Activated CD4-positive, alpha-beta memory T cell treated with anti-CD3 and anti-CD28 coated beads for 36 hours (primary cell): ENCODE measurements at regions of chr10 and their contacts with region 1.

Region 1: GRCh38 chr10:124461438-124462347 is at the start of gene LHPP:
- DNase-seq: peak; percentile 91
- H3K4me3 Mint-ChIP-seq: peak within 1 kb of the TSS; percentile 80
- H3K27ac Mint-ChIP-seq: peak within 1 kb of the TSS; percentile 66
- H3K4me1 Mint-ChIP-seq: peaks cover 23% of the 10 kb centered on the region
- H3K27me3 Mint-ChIP-seq: peaks cover 3% of the 10 kb centered on the region
- total RNA-seq, gene LHPP: 10.1 to 12.3 TPM

Region 2: DNA sequence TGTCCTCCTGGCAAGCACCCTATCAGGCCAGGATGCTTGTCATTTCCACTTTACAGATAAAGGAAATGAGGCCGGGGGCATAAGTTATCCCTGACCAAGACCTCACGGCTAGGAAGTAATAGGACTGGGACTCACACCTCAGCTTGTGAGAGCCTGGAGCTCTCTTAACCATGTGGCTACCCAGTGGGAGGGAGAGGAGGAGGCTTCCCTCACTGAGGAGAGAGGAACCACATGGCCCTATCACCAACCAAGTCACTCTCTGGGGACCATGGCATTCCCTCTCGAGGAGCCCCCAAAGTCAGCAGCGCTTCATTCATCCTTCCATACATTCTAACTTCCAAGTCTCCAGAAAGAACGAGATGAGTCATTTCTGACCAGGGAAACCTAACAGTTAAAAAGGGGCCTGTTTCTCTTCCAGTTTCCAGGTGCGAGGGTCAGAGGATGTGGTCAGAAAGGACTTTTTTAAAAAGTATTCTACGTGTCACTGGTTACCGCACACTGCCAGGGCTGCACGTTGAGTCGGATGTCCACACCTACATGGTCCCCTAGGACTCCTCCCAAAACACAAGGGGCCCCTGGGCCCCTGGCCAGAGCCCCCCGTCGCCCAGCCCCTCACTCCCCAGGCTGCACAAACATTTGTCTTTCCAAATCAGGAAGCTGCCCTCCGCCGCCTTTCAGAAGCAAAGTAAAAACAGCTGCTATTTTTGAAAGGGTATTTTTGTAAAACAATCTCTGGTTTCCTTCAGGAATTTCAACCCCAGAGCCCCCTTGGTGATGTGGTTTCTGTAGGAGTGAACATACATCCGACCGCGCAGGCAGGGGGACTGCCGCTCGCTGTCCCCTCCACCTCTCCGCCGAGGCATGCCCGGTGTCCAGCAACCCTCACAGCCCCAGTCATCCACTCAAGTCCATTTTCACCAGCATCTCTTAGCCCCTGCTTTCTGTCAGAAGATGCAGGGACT is 240.1 kb before region 1 on chr10:
- CTCF ChIA-PET with region 1: no interaction called
- POLR2A ChIA-PET with region 1: no interaction called
- intact Hi-C with region 1: loop called (anchors 10 kb)
- DNase-seq: no peak
- H3K4me3 Mint-ChIP-seq: no peak overlapping the region
- H3K27ac Mint-ChIP-seq: no peak overlapping the region
- H3K4me1 Mint-ChIP-seq: no peaks in the 10 kb centered on the region
- H3K27me3 Mint-ChIP-seq: peaks cover 9% of the 10 kb centered on the region

Region 3: GRCh38 chr10:124418726-124419501 is 42.8 kb before region 1 on chr10 and contains the start of gene OAT:
- CTCF ChIA-PET with region 1: interaction called, 4 read pairs
- POLR2A ChIA-PET with region 1: interaction called, 8 read pairs
- intact Hi-C with region 1: loop called (anchors 1 kb)
- DNase-seq: peak; percentile 97
- H3K4me3 Mint-ChIP-seq: peak within 1 kb of the TSS; percentile 79
- H3K27ac Mint-ChIP-seq: no peak within 1 kb of the TSS
- H3K4me1 Mint-ChIP-seq: peaks cover 16% of the 10 kb centered on the region
- H3K27me3 Mint-ChIP-seq: peaks cover 7% of the 10 kb centered on the region
- total RNA-seq, gene OAT: 34.6 to 38.1 TPM

Region 4: DNA sequence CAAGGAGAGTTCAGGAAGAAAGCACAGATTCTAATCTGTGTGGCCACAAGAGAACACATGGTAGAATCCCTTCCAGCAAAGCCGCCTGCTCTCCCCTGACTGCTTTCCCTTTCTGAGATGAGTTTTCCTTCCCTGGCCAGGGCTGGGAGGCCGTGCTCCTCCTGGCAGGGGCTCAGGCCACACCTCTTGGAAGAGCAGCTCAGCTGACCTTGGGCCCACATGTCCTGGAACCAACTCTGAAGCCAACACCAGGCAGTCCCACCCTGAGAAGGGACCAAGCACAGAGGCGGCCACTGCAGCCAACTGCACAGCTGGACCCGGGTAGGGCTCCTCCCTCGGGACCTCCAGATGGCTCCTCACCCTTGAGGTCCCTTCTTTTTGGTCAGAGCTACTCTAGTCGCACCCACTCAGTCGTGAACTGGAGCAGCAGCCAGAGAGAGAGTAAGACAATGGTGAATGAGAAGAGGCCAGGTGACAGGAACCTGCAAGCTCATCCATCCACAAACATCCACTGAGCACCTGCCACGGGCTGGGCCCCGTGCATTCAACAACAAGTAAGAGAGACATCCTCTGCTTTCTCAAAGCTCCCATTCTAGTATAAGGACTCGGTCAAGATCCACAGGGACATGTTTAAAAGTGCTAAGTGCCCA is 242.2 kb after region 1 on chr10:
- CTCF ChIA-PET with region 1: no interaction called
- POLR2A ChIA-PET with region 1: no interaction called
- intact Hi-C with region 1: no loop called
- DNase-seq: no peak
- H3K4me3 Mint-ChIP-seq: no peak overlapping the region
- H3K27ac Mint-ChIP-seq: peak overlapping the region; percentile 95
- H3K4me1 Mint-ChIP-seq: peaks cover 99% of the 10 kb centered on the region
- H3K27me3 Mint-ChIP-seq: no peaks in the 10 kb centered on the region

Region 5: GRCh38 chr10:124802313-124802675 is 340.6 kb after region 1 on chr10:
- CTCF ChIA-PET with region 1: no interaction called
- POLR2A ChIA-PET with region 1: no interaction called
- intact Hi-C with region 1: loop called (anchors 5 kb)
- DNase-seq: peak; percentile 39
- H3K4me3 Mint-ChIP-seq: peak overlapping the region; percentile 93
- H3K27ac Mint-ChIP-seq: peak overlapping the region; percentile 73
- H3K4me1 Mint-ChIP-seq: peaks cover 21% of the 10 kb centered on the region
- H3K27me3 Mint-ChIP-seq: peaks cover 2% of the 10 kb centered on the region

Region 6: GRCh38 chr10:124916585-124917427 is 455.1 kb after region 1 on chr10:
- CTCF ChIA-PET with region 1: interaction called, 3 read pairs
- POLR2A ChIA-PET with region 1: interaction called, 3 read pairs
- intact Hi-C with region 1: loop called (anchors 2 kb)
- DNase-seq: peak; percentile 97
- H3K4me3 Mint-ChIP-seq: peak overlapping the region; percentile 87
- H3K27ac Mint-ChIP-seq: peak overlapping the region; percentile 81
- H3K4me1 Mint-ChIP-seq: peaks cover 30% of the 10 kb centered on the region
- H3K27me3 Mint-ChIP-seq: no peaks in the 10 kb centered on the region